HepG2 (cell line): ENCODE measurements at regions of chr1 and their contacts with region 1.

Region 1: DNA sequence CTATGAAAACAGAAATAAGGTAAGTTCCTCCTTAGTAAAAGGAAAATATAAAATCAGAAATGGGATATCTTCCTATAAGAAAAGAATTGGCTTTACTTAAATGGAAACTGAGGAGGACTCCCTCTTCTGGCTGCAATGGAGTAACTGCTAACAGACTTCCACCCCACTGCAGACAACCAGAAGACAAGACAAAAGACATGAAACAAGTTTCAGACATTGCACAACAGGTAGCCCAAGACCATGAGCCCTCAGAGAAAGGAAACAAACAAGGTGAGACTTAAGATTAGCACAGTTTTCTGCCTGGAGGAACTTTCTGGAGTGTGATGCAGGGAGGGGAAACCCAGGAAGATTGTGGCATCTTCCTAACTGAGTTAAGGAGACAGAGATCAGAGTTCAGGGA is 17.0 kb upstream of the OLFML2B start:
- DNase-seq: peak; percentile 12
- ATAC-seq: peak; percentile 56; the same call in 2 of the 3 replicates
- H3K4me3 ChIP-seq: no peak overlapping the region
- H3K27ac ChIP-seq: no peak overlapping the region
- H3K4me1 ChIP-seq: peaks cover 11% of the 10 kb centered on the region
- H3K27me3 ChIP-seq: no peaks in the 10 kb centered on the region; a peak in 1 of 5 replicates
- CTCF ChIP-seq: peak; percentile 35
- EP300 ChIP-seq: no peak
- POLR2A ChIP-seq: no peak
- RAD21 ChIP-seq: no peak

Region 2: GRCh38 chr1:161763522-161764098 is 277.1 kb before region 1 on chr1:
- CTCF ChIA-PET with region 1: interaction called, 3 read pairs
- POLR2A ChIA-PET with region 1: no interaction called
- in situ Hi-C with region 1: no loop called
- intact Hi-C with region 1: loop called (anchors 1 kb)
- DNase-seq: peak; percentile 46
- ATAC-seq: peak; percentile 70
- H3K4me3 ChIP-seq: peak overlapping the region in 2 of 3 experiments; percentile 19 to 94; a peak in 2 of 6 replicates
- H3K27ac ChIP-seq: no peak overlapping the region
- H3K4me1 ChIP-seq: peaks cover 25% of the 10 kb centered on the region
- H3K27me3 ChIP-seq: no peaks in the 10 kb centered on the region; a peak in 2 of 5 replicates
- CTCF ChIP-seq: peak; percentile 67
- EP300 ChIP-seq: no peak
- POLR2A ChIP-seq: no peak
- RAD21 ChIP-seq: no peak

Region 3: GRCh38 chr1:161792740-161793139 is 247.9 kb before region 1 on chr1:
- CTCF ChIA-PET with region 1: interaction called, 23 read pairs
- POLR2A ChIA-PET with region 1: interaction called, 3 read pairs
- in situ Hi-C with region 1: no loop called
- intact Hi-C with region 1: loop called (anchors 1 kb)
- DNase-seq: peak; percentile 59
- ATAC-seq: peak; percentile 73
- H3K4me3 ChIP-seq: no peak overlapping the region
- H3K27ac ChIP-seq: no peak overlapping the region
- H3K4me1 ChIP-seq: no peaks in the 10 kb centered on the region
- H3K27me3 ChIP-seq: no peaks in the 10 kb centered on the region
- CTCF ChIP-seq: peak; percentile 73
- EP300 ChIP-seq: no peak
- POLR2A ChIP-seq: no peak
- RAD21 ChIP-seq: peak; percentile 53; the same call in 1 of the 2 replicates

Region 4: GRCh38 chr1:161864577-161864976 is 176.1 kb before region 1 on chr1:
- CTCF ChIA-PET with region 1: no interaction called
- POLR2A ChIA-PET with region 1: no interaction called
- in situ Hi-C with region 1: no loop called
- intact Hi-C with region 1: loop called (anchors 1 kb)
- DNase-seq: peak; percentile 5
- ATAC-seq: peak; percentile 51; the same call in 1 of the 3 replicates
- H3K4me3 ChIP-seq: no peak overlapping the region
- H3K27ac ChIP-seq: no peak overlapping the region
- H3K4me1 ChIP-seq: peaks cover 11% of the 10 kb centered on the region; the same call in 1 of the 2 replicates
- H3K27me3 ChIP-seq: no peaks in the 10 kb centered on the region
- CTCF ChIP-seq: peak; percentile 29
- EP300 ChIP-seq: no peak
- POLR2A ChIP-seq: no peak
- RAD21 ChIP-seq: no peak

Region 5: DNA sequence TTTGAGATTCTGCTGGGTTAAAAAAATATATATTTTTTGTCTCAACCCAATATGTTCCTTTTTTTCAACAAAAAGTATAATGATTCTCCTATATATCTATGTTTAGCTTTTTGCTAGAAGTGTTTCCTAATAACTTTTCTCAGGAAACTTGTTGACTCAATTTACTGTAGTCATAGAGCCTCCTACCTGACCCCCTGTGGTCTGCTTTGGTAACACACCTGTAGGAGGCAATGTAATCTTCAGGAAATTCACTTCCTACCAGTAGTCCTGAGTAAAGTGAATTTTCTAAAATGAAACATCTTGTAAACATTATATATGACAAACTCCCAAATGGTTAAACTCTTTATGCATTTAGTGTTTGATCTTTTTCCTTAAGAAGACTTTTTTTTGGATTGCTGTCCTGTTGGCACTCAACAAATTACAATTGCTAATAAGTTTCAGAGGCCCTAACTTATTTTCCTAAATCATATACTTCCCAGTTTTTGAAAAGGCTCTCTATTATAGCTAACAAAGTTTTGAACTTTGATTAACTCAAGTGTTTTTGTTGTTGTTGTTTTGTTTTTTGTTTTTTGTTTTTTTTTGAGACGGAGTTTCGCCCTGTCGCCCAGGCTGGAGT is 135.3 kb before region 1 on chr1:
- CTCF ChIA-PET with region 1: no interaction called
- POLR2A ChIA-PET with region 1: no interaction called
- in situ Hi-C with region 1: no loop called
- intact Hi-C with region 1: loop called (anchors 1 kb)
- DNase-seq: peak; percentile 22
- ATAC-seq: peak; percentile 88
- H3K4me3 ChIP-seq: no peak overlapping the region
- H3K27ac ChIP-seq: no peak overlapping the region
- H3K4me1 ChIP-seq: peaks cover 3% of the 10 kb centered on the region; the same call in 1 of the 2 replicates
- H3K27me3 ChIP-seq: no peaks in the 10 kb centered on the region
- CTCF ChIP-seq: peak; percentile 51
- EP300 ChIP-seq: no peak
- POLR2A ChIP-seq: no peak
- RAD21 ChIP-seq: no peak